ENCODE measurements at regions of chr2 and their contacts with region 1.

Region 1: GRCh38 chr2:190781604-190782198 is 98.9 kb upstream of the GLS start:
- DNase-seq: peak; percentile 66
- H3K4me3 Mint-ChIP-seq: no peak overlapping the region
- H3K27ac Mint-ChIP-seq: no peak overlapping the region
- H3K4me1 Mint-ChIP-seq: peaks cover 22% of the 10 kb centered on the region
- H3K27me3 Mint-ChIP-seq: peaks cover 9% of the 10 kb centered on the region

Region 2: GRCh38 chr2:190137561-190137960 is 644.1 kb before region 1 on chr2:
- CTCF ChIA-PET with region 1: no interaction called
- POLR2A ChIA-PET with region 1: no interaction called
- intact Hi-C with region 1: no loop called
- DNase-seq: no peak
- H3K4me3 Mint-ChIP-seq: no peak overlapping the region
- H3K27ac Mint-ChIP-seq: no peak overlapping the region
- H3K4me1 Mint-ChIP-seq: no peaks in the 10 kb centered on the region
- H3K27me3 Mint-ChIP-seq: no peaks in the 10 kb centered on the region

Region 3: DNA sequence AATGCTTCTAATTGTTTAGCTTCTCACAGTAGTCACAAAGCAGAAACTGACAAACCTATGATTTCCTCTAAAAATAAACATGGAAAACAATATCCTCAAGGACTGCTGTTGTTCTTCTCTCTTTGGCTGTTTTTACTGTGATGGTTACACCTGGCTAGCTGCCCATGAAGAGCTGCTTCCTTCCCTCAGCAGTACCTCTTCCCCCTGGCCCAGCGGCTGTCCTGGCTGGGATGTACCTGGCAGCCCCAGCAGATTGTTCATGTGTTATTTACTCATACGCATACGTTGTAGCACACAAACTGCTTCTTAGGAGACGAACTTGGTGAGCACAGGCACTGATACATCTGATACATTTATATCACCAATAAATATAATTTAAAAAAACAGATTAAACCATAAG is 274.6 kb before region 1 on chr2:
- CTCF ChIA-PET with region 1: no interaction called
- POLR2A ChIA-PET with region 1: no interaction called
- intact Hi-C with region 1: no loop called
- DNase-seq: no peak
- H3K4me3 Mint-ChIP-seq: no peak overlapping the region
- H3K27ac Mint-ChIP-seq: no peak overlapping the region
- H3K4me1 Mint-ChIP-seq: peaks cover 3% of the 10 kb centered on the region
- H3K27me3 Mint-ChIP-seq: no peaks in the 10 kb centered on the region

Region 4: DNA sequence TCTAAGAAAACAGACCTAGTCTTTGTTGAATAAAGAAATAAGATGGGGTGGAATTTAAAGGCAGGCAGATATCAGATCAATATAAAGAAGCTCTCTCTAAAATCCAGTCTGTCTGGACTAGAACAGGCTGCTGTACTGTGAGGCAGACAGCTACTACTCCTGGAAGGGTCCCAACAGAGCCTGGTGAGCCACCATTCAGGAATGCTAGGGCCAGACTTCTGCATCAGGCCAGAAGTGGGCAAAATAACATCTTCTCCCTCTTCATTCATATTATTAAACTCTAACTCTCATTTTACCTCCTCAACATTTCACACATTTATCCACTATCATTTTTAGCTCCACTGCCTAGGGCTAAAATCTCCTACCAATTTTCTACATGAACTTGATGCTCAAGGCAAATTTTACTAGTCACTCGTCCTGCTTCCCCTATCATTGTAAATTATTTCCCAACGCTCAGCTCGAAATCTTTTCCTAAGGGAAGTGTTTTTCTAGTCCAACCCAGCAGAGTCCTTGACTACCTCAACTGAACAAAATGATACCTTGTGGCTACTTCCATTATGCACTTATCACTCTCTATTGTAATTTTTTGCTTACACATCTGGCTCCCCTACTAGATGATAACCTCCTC is 53.7 kb after region 1 on chr2:
- CTCF ChIA-PET with region 1: no interaction called
- POLR2A ChIA-PET with region 1: no interaction called
- intact Hi-C with region 1: no loop called
- DNase-seq: no peak
- H3K4me3 Mint-ChIP-seq: no peak overlapping the region
- H3K27ac Mint-ChIP-seq: no peak overlapping the region
- H3K4me1 Mint-ChIP-seq: peaks cover 11% of the 10 kb centered on the region
- H3K27me3 Mint-ChIP-seq: no peaks in the 10 kb centered on the region

Region 5: GRCh38 chr2:190961918-190962487 is 180.3 kb after region 1 on chr2:
- CTCF ChIA-PET with region 1: interaction called, 11 read pairs
- POLR2A ChIA-PET with region 1: no interaction called
- intact Hi-C with region 1: loop called (anchors 5 kb)
- DNase-seq: no peak
- H3K4me3 Mint-ChIP-seq: no peak overlapping the region
- H3K27ac Mint-ChIP-seq: peak overlapping the region; percentile 20
- H3K4me1 Mint-ChIP-seq: peaks cover 16% of the 10 kb centered on the region
- H3K27me3 Mint-ChIP-seq: no peaks in the 10 kb centered on the region